ENCODE measurements at regions of chr7 and their contacts with region 1.

Region 1: DNA sequence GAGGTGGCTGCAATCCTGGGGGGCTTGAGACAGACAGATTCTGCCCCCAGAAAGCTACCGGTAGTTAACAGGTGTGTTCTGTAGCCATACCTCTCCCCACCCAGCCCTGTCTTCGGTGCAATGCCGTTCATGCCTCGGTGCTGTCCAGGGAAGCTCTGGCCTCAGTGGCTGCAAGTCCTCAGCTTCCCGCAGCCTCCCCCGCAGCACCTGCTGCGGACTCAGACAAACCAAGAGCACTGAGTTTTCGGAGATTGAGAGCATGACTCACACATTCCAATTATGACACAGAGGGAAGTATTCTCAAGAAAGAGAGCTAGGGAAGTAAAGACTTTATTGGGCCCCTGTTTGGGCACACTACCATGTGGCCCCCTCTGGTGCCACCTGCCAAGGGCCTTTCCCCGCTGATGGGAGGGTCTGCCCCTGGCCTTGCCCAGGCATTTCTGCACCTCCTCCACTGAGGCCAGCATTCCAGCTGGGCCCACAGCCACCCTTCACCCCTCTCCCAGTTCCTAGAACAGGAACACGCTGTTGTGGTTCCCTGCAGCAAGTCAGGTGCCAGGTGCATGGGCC is 30.2 kb upstream of the EZH2 start:
- DNase-seq: peak in 2 of 9 donors; percentile 17 to 77
- ATAC-seq: no peak
- H3K4me3 ChIP-seq: no peak overlapping the region
- H3K4me3 Mint-ChIP-seq: peak overlapping the region; percentile 34 to 84 (median 74)
- H3K27ac ChIP-seq: peak overlapping the region; percentile 60
- H3K27ac Mint-ChIP-seq: peak overlapping the region in 8 of 9 donors; percentile 62 to 89 (median 81)
- H3K4me1 ChIP-seq: peaks cover 39 to 45% of the 10 kb centered on the region in 2 donors
- H3K4me1 Mint-ChIP-seq: peaks cover 44 to 73% (median 63%) of the 10 kb centered on the region in 7 donors
- H3K27me3 ChIP-seq: no peaks in the 10 kb centered on the region
- H3K27me3 Mint-ChIP-seq: no peaks in the 10 kb centered on the region

Region 2: GRCh38 chr7:148773334-148773733 is 141.0 kb before region 1 on chr7:
- CTCF ChIA-PET with region 1: no interaction called
- POLR2A ChIA-PET with region 1: no interaction called
- intact Hi-C with region 1: no loop called
- DNase-seq: peak in 8 of 9 donors; percentile 12 to 51 (median 38)
- ATAC-seq: peak; percentile 95
- H3K4me3 ChIP-seq: no peak overlapping the region
- H3K4me3 Mint-ChIP-seq: peak overlapping the region; percentile 34 to 82 (median 67)
- H3K27ac ChIP-seq: peak overlapping the region; percentile 46
- H3K27ac Mint-ChIP-seq: peak overlapping the region; percentile 53 to 93 (median 86)
- H3K4me1 ChIP-seq: peaks cover 18 to 19% of the 10 kb centered on the region in 2 donors
- H3K4me1 Mint-ChIP-seq: peaks cover 27 to 48% (median 36%) of the 10 kb centered on the region in 7 donors
- H3K27me3 ChIP-seq: no peaks in the 10 kb centered on the region
- H3K27me3 Mint-ChIP-seq: no peaks in the 10 kb centered on the region

Region 3: GRCh38 chr7:148856891-148857290 is 57.4 kb before region 1 on chr7:
- CTCF ChIA-PET with region 1: interaction called, 5 read pairs
- POLR2A ChIA-PET with region 1: no interaction called
- intact Hi-C with region 1: loop called in 1 of 2 experiments (anchors 1 kb)
- DNase-seq: no peak
- ATAC-seq: peak; percentile 57
- H3K4me3 ChIP-seq: no peak overlapping the region
- H3K4me3 Mint-ChIP-seq: peak overlapping the region in 1 of 10 donors; percentile 60
- H3K27ac ChIP-seq: no peak overlapping the region
- H3K27ac Mint-ChIP-seq: peak overlapping the region in 1 of 9 donors; percentile 63
- H3K4me1 ChIP-seq: peaks cover 3 to 5% of the 10 kb centered on the region in 2 donors
- H3K4me1 Mint-ChIP-seq: peaks cover 8 to 45% (median 15%) of the 10 kb centered on the region in 7 donors
- H3K27me3 ChIP-seq: no peaks in the 10 kb centered on the region
- H3K27me3 Mint-ChIP-seq: no peaks in the 10 kb centered on the region

Region 4: GRCh38 chr7:148927123-148928045 is 13.1 kb after region 1 on chr7:
- CTCF ChIA-PET with region 1: interaction called, 3 read pairs
- POLR2A ChIA-PET with region 1: no interaction called
- intact Hi-C with region 1: loop called in 1 of 2 experiments (anchors 1 kb)
- DNase-seq: no peak
- ATAC-seq: no peak
- H3K4me3 ChIP-seq: no peak overlapping the region
- H3K4me3 Mint-ChIP-seq: peak overlapping the region in 1 of 10 donors; percentile 8
- H3K27ac ChIP-seq: no peak overlapping the region
- H3K27ac Mint-ChIP-seq: peak overlapping the region in 1 of 9 donors; percentile 19
- H3K4me1 ChIP-seq: no peaks in the 10 kb centered on the region
- H3K4me1 Mint-ChIP-seq: peaks cover 3 to 42% (median 28%) of the 10 kb centered on the region in 7 donors
- H3K27me3 ChIP-seq: no peaks in the 10 kb centered on the region
- H3K27me3 Mint-ChIP-seq: no peaks in the 10 kb centered on the region

Region 5: GRCh38 chr7:148940702-148941597 is 26.7 kb after region 1 on chr7:
- CTCF ChIA-PET with region 1: interaction called, 3 read pairs
- POLR2A ChIA-PET with region 1: interaction called, 17 read pairs
- intact Hi-C with region 1: loop called (anchors 1 kb)
- DNase-seq: peak; percentile 45 to 86 (median 76)
- ATAC-seq: peak; percentile 88
- H3K4me3 ChIP-seq: peak overlapping the region; percentile 95
- H3K4me3 Mint-ChIP-seq: peak overlapping the region; percentile 86 to 99 (median 96)
- H3K27ac ChIP-seq: peak overlapping the region; percentile 88
- H3K27ac Mint-ChIP-seq: peak overlapping the region; percentile 94 to 99 (median 98)
- H3K4me1 ChIP-seq: peaks cover 7 to 12% of the 10 kb centered on the region in 2 donors
- H3K4me1 Mint-ChIP-seq: peaks cover 8 to 25% (median 20%) of the 10 kb centered on the region in 7 donors
- H3K27me3 ChIP-seq: no peaks in the 10 kb centered on the region
- H3K27me3 Mint-ChIP-seq: no peaks in the 10 kb centered on the region

Measured in naive thymus-derived CD4-positive, alpha-beta T cell (primary cell).